ENCODE measurements at regions of chr2 and their contacts with region 1.

Region 1: DNA sequence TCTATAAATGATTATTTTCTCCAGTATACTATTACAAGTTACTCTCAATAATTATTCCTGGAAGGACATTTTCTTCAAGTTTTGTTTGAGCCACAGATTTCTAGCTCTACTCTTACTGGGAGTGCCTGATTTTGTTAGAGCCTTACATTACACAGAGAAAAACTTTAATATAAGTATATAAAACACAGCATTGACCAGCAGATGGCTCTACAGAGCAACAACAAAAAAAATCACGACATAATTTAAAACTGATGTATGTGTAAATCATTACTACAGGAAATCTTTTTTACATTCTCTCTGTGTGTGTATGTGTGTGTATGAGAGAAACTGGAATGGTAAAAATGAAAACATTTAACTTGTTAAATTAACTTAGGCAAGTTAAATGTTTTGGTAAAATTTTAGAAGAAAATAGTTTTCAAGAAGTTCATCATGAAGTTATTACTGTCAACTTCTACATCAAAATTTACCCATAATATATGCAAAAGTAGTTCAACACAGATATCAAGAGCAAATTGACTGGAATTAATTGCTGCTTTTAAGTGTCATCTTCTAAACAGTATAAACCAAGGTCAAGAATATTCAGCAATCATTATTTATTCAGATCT is 103.3 kb downstream of the MDH1 start:
- DNase-seq: peak; percentile 65
- ATAC-seq: peak; percentile 86
- H3K4me3 ChIP-seq: no peak overlapping the region
- H3K27ac ChIP-seq: no peak overlapping the region
- H3K4me1 ChIP-seq: no peaks in the 10 kb centered on the region
- H3K27me3 ChIP-seq: no peaks in the 10 kb centered on the region
- CTCF ChIP-seq: peak; percentile 65
- POLR2A ChIP-seq: no peak
- RAD21 ChIP-seq: peak; percentile 65

Region 2: GRCh38 chr2:63604666-63605065 is 87.4 kb before region 1 on chr2:
- CTCF ChIA-PET with region 1: no interaction called
- POLR2A ChIA-PET with region 1: no interaction called
- dilution Hi-C with region 1: no loop called
- in situ Hi-C with region 1: no loop called
- intact Hi-C with region 1: no loop called
- DNase-seq: no peak
- ATAC-seq: no peak
- H3K4me3 ChIP-seq: no peak overlapping the region
- H3K27ac ChIP-seq: no peak overlapping the region
- H3K4me1 ChIP-seq: no peaks in the 10 kb centered on the region
- H3K27me3 ChIP-seq: no peaks in the 10 kb centered on the region
- CTCF ChIP-seq: no peak
- POLR2A ChIP-seq: no peak
- RAD21 ChIP-seq: no peak

Region 3: GRCh38 chr2:63617366-63617765 is 74.7 kb before region 1 on chr2:
- CTCF ChIA-PET with region 1: no interaction called
- POLR2A ChIA-PET with region 1: no interaction called
- dilution Hi-C with region 1: no loop called
- in situ Hi-C with region 1: no loop called
- intact Hi-C with region 1: no loop called
- DNase-seq: no peak
- ATAC-seq: no peak
- H3K4me3 ChIP-seq: no peak overlapping the region
- H3K27ac ChIP-seq: no peak overlapping the region
- H3K4me1 ChIP-seq: peaks cover 2% of the 10 kb centered on the region; the same call in 1 of the 2 replicates
- H3K27me3 ChIP-seq: no peaks in the 10 kb centered on the region
- CTCF ChIP-seq: no peak
- POLR2A ChIP-seq: no peak
- RAD21 ChIP-seq: no peak

Region 4: GRCh38 chr2:63841254-63842022 is 149.3 kb after region 1 on chr2 and contains the start of gene UGP2:
- CTCF ChIA-PET with region 1: interaction called, 6 read pairs
- POLR2A ChIA-PET with region 1: no interaction called
- dilution Hi-C with region 1: no loop called
- in situ Hi-C with region 1: no loop called
- intact Hi-C with region 1: loop called (anchors 1 kb)
- DNase-seq: peak; percentile 92
- ATAC-seq: peak; percentile 82
- H3K4me3 ChIP-seq: peak within 1 kb of the TSS; percentile 69
- H3K27ac ChIP-seq: peak within 1 kb of the TSS; percentile 90
- H3K4me1 ChIP-seq: peaks cover 6% of the 10 kb centered on the region
- H3K27me3 ChIP-seq: no peaks in the 10 kb centered on the region
- CTCF ChIP-seq: 0 out of 2 replicates have a peak, but pooled peaks have one; percentile 27
- POLR2A ChIP-seq: peak; percentile 93
- RAD21 ChIP-seq: no peak; the same call in 1 of the 2 replicates
- total RNA-seq, gene UGP2: 58.8 and 101 TPM in 2 replicates

Region 5: GRCh38 chr2:63861220-63861822 is 169.2 kb after region 1 on chr2:
- CTCF ChIA-PET with region 1: interaction called, 7 read pairs
- POLR2A ChIA-PET with region 1: no interaction called
- dilution Hi-C with region 1: loop called (anchors 25 kb)
- in situ Hi-C with region 1: loop called (anchors 10 kb)
- intact Hi-C with region 1: loop called (anchors 1 kb)
- DNase-seq: peak; percentile 58
- ATAC-seq: peak; percentile 52
- H3K4me3 ChIP-seq: no peak overlapping the region
- H3K27ac ChIP-seq: no peak overlapping the region
- H3K4me1 ChIP-seq: peaks cover 13% of the 10 kb centered on the region
- H3K27me3 ChIP-seq: no peaks in the 10 kb centered on the region
- CTCF ChIP-seq: peak; percentile 61
- POLR2A ChIP-seq: no peak
- RAD21 ChIP-seq: peak; percentile 70

Region 6: DNA sequence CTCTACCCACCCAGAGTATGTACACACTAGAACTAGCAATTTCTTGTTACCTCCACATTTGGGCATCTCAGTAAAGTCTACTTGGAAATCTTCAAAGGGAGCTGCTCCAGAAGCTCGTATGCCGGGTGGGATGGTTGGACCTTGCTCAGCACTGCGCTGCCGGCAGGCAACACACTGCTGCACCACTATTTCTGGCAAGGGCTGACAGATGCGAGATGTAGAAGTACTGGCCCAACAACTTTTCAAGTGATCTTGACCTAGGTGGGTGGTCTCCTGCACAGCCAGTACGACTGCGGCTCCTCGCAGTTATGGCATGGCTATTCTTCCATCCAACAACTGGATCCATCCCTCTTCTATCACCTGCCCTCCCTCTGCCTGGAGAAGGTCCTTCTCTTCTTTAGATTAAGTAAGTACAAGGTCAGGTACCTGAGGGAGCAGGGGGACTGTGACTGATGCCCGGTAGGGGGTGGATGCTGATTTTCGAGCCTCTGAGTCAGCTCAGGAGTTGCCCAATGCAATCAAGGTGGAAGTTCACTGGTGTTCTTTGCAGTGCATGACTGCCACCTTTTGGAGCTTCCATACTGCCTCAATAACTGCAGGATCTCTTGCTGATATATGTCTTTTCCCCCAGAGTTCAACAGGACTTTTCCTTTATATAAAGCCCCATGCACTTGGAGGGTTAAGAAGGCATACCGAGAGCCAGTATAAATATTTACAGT is 1196.6 kb after region 1 on chr2:
- CTCF ChIA-PET with region 1: no interaction called
- POLR2A ChIA-PET with region 1: no interaction called
- dilution Hi-C with region 1: no loop called
- in situ Hi-C with region 1: no loop called
- intact Hi-C with region 1: loop called (anchors 5 kb)
- DNase-seq: peak; percentile 55
- ATAC-seq: peak; percentile 49
- H3K4me3 ChIP-seq: no peak overlapping the region
- H3K27ac ChIP-seq: no peak overlapping the region
- H3K4me1 ChIP-seq: no peaks in the 10 kb centered on the region
- H3K27me3 ChIP-seq: peaks cover 19% of the 10 kb centered on the region
- CTCF ChIP-seq: peak; percentile 60
- POLR2A ChIP-seq: no peak
- RAD21 ChIP-seq: peak; percentile 65